Endothelial cell of umbilical vein (primary cell): ENCODE measurements at regions of chr19 and their contacts with region 1.

Region 1: DNA sequence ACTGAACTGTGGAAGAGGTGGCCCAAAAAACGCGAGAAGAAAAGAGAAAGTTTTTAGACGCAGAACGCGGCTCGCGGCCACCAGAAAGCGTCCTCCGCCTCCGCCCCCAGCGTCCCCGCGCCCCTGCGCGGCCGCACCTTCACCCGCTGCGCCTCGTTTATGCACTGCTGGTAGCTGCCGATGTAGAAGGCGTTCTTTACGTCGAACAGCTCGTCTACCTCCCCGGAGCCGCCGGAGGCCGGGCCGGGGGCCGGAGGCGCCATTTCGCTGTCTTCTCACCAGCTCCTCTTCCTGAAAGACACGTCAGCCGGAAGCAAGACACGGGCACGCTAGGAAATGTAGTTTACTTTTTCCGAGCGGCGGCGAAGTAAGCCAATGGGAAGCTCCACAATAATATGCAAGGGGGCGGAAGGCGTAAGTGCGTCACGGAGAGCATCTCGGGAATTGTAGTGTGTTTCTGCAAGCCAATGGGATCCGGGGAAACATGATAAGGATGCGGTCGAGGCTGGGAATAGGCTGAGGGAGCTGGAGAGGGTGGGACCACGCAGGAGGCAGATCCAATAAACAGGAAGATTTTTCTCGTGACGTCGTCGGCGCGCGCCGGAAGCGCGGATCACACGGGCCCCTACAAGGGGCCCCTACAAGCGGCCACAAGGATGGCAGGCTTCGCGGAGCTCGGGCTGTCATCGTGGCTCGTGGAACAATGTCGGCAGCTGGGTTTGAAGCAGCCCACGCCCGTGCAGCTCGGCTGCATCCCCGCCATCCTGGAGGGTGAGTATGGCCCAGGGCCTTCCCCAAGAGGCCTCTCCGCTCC is at the starts of genes COPE and DDX49:
- DNase-seq: peak; percentile 100
- H3K4me3 ChIP-seq: peak within 1 kb of the TSS; percentile 82 to 99 (median 94)
- H3K27ac ChIP-seq: peak within 1 kb of the TSS; percentile 87
- H3K4me1 ChIP-seq: peaks cover 13% of the 10 kb centered on the region
- H3K27me3 ChIP-seq: no peaks in the 10 kb centered on the region
- CTCF ChIP-seq: no peak
- POLR2A ChIP-seq: peak; percentile 78
- total RNA-seq, gene COPE: 239 and 252 TPM in 2 replicates
- total RNA-seq, gene DDX49: 47.7 and 51.9 TPM in 2 replicates

Region 2: GRCh38 chr19:18436671-18437490 is 482.4 kb before region 1 on chr19:
- CTCF ChIA-PET with region 1: no interaction called
- POLR2A ChIA-PET with region 1: no interaction called
- dilution Hi-C with region 1: no loop called
- intact Hi-C with region 1: no loop called
- DNase-seq: peak; percentile 86
- H3K4me3 ChIP-seq: peak overlapping the region in 2 of 3 experiments; percentile 19 to 75
- H3K27ac ChIP-seq: no peak overlapping the region
- H3K4me1 ChIP-seq: peaks cover 14% of the 10 kb centered on the region
- H3K27me3 ChIP-seq: no peaks in the 10 kb centered on the region
- CTCF ChIP-seq: peak in 1 of 2 donors; percentile 27
- POLR2A ChIP-seq: no peak

Region 3: DNA sequence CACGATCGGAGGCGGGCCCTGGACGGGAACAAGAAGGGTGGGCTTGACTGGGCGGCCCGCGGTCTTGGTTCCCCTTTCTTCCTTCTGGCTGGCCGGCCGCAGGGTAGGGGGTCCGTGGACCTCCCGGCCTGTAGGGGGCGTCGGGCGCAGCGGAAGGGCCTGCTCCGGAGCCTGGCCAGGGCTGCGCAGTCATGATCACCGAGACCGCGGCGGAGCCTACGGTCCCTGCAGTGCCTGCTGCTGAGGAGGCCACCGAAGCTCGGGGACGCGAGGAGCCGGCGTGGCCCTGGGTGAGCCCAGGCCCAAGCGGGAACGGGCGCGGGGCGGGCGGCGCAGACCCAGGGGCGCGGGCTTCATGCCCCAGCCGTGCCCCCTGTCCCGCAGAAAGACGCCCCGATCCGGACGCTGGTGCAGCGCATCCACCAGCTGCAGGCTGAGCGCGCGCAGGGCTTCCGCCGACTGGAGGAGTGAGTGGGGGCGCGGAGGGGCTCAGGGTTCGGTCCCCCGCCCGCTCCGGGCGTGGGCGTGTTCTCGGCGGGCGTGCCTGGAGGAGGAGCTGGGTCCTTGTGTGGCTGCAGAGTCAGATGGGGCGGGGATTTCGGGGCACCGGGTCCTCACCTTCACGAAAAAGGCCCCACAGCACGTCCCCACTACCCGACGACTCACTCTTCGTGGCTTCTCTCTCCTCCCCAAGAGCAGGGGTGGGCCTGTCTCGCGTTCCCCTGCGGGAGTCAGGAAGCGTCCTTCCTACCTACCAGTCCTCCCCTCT is 330.5 kb before region 1 on chr19 and contains the start of gene REX1BD:
- CTCF ChIA-PET with region 1: interaction called, 5 read pairs
- POLR2A ChIA-PET with region 1: no interaction called
- dilution Hi-C with region 1: no loop called
- intact Hi-C with region 1: loop called (anchors 1 kb)
- DNase-seq: peak; percentile 85
- H3K4me3 ChIP-seq: peak within 1 kb of the TSS; percentile 32 to 78 (median 65)
- H3K27ac ChIP-seq: peak within 1 kb of the TSS; percentile 16
- H3K4me1 ChIP-seq: peaks cover 15% of the 10 kb centered on the region
- H3K27me3 ChIP-seq: no peaks in the 10 kb centered on the region
- CTCF ChIP-seq: peak; percentile 95 to 96
- POLR2A ChIP-seq: peak; percentile 87
- total RNA-seq, gene REX1BD: 64.0 and 64.4 TPM in 2 replicates

Region 4: GRCh38 chr19:18785179-18786128 is 133.8 kb before region 1 on chr19:
- CTCF ChIA-PET with region 1: no interaction called
- POLR2A ChIA-PET with region 1: interaction called, 12 read pairs
- dilution Hi-C with region 1: no loop called
- intact Hi-C with region 1: no loop called
- DNase-seq: peak; percentile 34
- H3K4me3 ChIP-seq: no peak overlapping the region
- H3K27ac ChIP-seq: no peak overlapping the region
- H3K4me1 ChIP-seq: no peaks in the 10 kb centered on the region
- H3K27me3 ChIP-seq: peaks cover 35 to 36% of the 10 kb centered on the region in 2 experiments
- CTCF ChIP-seq: no peak
- POLR2A ChIP-seq: no peak

Region 5: GRCh38 chr19:18879579-18880373 is 39.5 kb before region 1 on chr19:
- CTCF ChIA-PET with region 1: no interaction called
- POLR2A ChIA-PET with region 1: no interaction called
- dilution Hi-C with region 1: no loop called
- intact Hi-C with region 1: no loop called
- DNase-seq: peak; percentile 14
- H3K4me3 ChIP-seq: no peak overlapping the region
- H3K27ac ChIP-seq: no peak overlapping the region
- H3K4me1 ChIP-seq: no peaks in the 10 kb centered on the region
- H3K27me3 ChIP-seq: no peaks in the 10 kb centered on the region
- CTCF ChIP-seq: no peak
- POLR2A ChIP-seq: no peak

Region 6: GRCh38 chr19:18895038-18895823 is 24.1 kb before region 1 on chr19:
- CTCF ChIA-PET with region 1: interaction called, 6 read pairs
- POLR2A ChIA-PET with region 1: no interaction called
- dilution Hi-C with region 1: no loop called
- intact Hi-C with region 1: loop called (anchors 2 kb)
- DNase-seq: peak; percentile 42
- H3K4me3 ChIP-seq: peak overlapping the region; percentile 35 to 54 (median 41)
- H3K27ac ChIP-seq: no peak overlapping the region
- H3K4me1 ChIP-seq: no peaks in the 10 kb centered on the region
- H3K27me3 ChIP-seq: peaks cover 0 to 2% of the 10 kb centered on the region in 2 experiments
- CTCF ChIP-seq: peak; percentile 33 to 54
- POLR2A ChIP-seq: no peak

Region 7: DNA sequence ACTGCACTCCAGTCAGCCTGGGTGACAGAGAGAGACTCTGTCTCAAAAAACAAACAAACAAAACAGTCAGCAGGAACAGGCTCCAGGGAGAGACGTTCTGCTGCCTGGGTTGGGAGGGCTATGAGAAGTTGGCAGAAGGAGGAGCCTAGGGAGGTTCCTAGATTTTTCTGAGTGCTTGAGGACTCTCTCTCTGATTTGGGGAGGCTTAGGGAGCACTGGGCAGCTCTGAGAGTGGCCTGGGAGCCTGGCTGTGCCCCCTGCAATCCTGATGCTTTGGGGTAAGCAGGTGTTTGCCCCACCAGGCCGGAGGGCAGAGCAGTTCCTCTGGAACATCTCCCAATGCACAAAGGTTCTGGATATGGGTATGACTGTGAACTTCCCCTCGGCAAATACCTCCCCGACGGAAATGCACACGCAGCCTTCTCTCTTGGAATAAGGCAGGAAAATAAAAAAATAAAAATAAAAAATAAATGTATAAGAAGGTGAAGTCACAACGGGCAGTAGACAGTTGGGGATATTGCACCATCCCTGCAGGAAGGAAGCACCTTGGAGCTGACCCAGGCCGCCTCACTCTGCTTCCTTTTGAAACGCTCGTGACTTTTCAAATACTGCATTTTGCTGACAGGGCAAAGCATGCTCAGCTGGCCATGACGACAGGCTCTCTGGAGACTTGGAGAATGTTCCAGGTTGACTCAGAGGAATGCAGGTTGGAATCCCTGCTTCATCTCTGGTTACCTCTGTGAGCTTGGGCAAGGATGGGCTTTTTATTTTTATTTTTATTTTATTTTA is 48.3 kb after region 1 on chr19:
- CTCF ChIA-PET with region 1: interaction called, 3 read pairs
- POLR2A ChIA-PET with region 1: no interaction called
- dilution Hi-C with region 1: no loop called
- intact Hi-C with region 1: loop called (anchors 1 kb)
- DNase-seq: peak; percentile 71
- H3K4me3 ChIP-seq: peak overlapping the region in 1 of 3 experiments; percentile 11
- H3K27ac ChIP-seq: peak overlapping the region; percentile 48
- H3K4me1 ChIP-seq: peaks cover 30% of the 10 kb centered on the region
- H3K27me3 ChIP-seq: no peaks in the 10 kb centered on the region
- CTCF ChIP-seq: no peak
- POLR2A ChIP-seq: no peak

Region 8: DNA sequence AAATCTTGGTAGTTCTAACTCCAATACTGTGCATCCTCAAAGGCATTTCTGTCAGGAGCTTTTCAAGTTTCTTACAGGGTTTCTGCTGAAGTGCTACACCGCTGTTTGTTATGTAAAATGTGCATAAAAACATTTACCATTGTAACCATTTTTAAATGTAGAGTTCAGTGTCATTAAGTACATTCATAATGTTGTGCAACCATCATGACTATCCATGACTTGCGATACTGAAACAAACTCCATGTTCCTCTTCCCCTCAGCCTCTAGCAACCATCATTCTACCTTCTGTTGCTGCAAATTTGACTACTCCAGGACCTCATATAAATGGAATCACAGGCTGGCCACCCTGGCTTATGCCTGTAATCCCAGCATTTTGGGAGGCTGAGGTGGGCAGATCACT is 130.1 kb after region 1 on chr19:
- CTCF ChIA-PET with region 1: no interaction called
- POLR2A ChIA-PET with region 1: no interaction called
- dilution Hi-C with region 1: no loop called
- intact Hi-C with region 1: no loop called
- DNase-seq: no peak
- H3K4me3 ChIP-seq: no peak overlapping the region
- H3K27ac ChIP-seq: no peak overlapping the region
- H3K4me1 ChIP-seq: no peaks in the 10 kb centered on the region
- H3K27me3 ChIP-seq: no peaks in the 10 kb centered on the region
- CTCF ChIP-seq: no peak
- POLR2A ChIP-seq: no peak

Region 9: DNA sequence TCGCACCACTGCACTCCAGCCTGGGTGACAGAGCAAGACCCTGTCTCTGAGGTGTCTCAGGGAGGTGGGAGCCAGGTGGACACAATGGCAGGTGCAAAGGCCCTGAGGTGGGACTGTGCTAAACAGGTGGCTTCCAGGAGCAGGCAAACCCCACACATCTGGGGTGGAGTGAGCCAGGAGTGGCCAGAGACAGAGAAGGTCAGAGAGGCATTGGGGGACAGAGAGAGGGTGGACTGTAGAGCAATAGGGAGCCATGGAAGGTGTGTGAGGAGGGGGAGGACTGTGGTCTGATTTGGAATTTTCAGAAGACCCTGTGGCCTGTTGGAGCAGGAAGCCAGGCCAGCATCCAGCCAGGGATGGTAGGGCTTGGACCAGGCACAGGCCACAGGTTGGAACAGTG is 246.1 kb after region 1 on chr19:
- CTCF ChIA-PET with region 1: no interaction called
- POLR2A ChIA-PET with region 1: no interaction called
- dilution Hi-C with region 1: no loop called
- intact Hi-C with region 1: no loop called
- DNase-seq: no peak
- H3K4me3 ChIP-seq: no peak overlapping the region
- H3K27ac ChIP-seq: no peak overlapping the region
- H3K4me1 ChIP-seq: peaks cover 4% of the 10 kb centered on the region
- H3K27me3 ChIP-seq: no peaks in the 10 kb centered on the region
- CTCF ChIP-seq: no peak
- POLR2A ChIP-seq: no peak